Activated CD4-positive, alpha-beta T cell treated with anti-CD3 and anti-CD28 coated beads, Interleukin-2, amount 10 ng/mL, durations not matched to agents 24 days and 14 days (primary cell): ENCODE measurements at regions of chr13 and their contacts with region 1.

Region 1: DNA sequence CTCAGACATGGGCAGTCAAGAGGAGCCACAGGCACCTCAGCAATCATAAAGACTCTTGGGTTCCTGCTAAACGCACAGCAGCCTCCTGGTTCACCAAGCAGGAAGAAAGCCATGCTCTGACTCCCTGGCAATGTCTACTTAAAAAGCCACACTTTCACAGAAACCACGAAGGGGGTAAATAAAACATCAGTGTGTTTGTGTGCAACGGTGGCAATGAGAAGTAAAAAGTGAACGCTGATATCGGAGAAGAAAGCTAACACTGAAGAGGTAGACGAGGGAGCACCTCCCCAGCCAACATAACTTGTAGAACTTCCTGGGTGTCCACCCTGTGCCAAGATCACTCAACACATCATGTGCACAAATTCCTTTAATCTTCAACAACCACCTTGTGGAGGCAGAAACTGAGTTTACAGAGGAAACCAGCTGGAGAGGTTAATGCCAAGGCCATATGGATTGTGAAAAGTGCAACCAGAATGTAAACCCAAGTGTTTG is 30.2 kb downstream of the HSPH1 start:
- DNase-seq: peak; percentile 65
- H3K4me3 Mint-ChIP-seq: no peak overlapping the region
- H3K27ac Mint-ChIP-seq: peak overlapping the region; percentile 70
- H3K4me1 Mint-ChIP-seq: peaks cover 38% of the 10 kb centered on the region
- H3K27me3 Mint-ChIP-seq: peaks cover 15% of the 10 kb centered on the region

Region 2: DNA sequence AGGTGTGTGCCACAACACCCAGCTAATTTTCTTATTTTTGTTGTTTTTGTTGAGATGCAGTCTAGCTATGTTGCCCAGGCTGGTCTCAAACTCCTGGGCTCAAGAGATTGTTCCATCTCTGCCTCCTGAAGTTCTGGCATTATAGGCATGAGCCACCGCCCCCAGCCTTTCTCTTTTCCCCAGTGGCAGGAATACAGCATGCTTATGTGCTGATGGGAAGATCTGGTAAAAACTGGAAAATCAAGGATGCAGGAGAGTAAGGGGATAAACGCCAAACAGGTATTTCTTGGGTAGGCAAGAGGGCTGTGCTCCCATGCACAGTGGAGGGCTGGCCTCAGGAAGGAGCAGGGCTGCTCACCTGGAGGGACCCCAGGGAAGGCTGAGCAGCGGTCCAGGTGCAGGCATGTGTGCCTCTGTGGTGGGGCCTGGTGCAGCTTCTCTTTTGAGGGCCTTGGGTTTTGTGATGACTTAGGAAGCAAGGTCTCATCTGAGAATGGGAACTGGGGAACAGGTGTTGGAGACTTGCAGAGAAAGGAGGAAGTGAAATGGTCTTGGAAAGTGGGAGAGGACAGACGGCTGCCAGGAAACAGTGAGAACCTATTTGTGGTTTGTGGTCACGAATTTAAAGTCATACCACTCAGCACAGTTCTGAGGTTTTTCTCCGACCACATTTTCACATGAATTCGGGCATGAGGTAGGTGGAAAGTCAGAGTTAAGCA is 92.5 kb before region 1 on chr13:
- intact Hi-C with region 1: loop called (anchors 1 kb)
- DNase-seq: peak; percentile 81
- H3K4me3 Mint-ChIP-seq: peak overlapping the region; percentile 74
- H3K27ac Mint-ChIP-seq: peak overlapping the region; percentile 70
- H3K4me1 Mint-ChIP-seq: peaks cover 51% of the 10 kb centered on the region
- H3K27me3 Mint-ChIP-seq: peaks cover 29% of the 10 kb centered on the region

Region 3: GRCh38 chr13:31073859-31074718 is 57.4 kb before region 1 on chr13:
- intact Hi-C with region 1: loop called (anchors 5 kb)
- DNase-seq: peak; percentile 77
- H3K4me3 Mint-ChIP-seq: no peak overlapping the region
- H3K27ac Mint-ChIP-seq: no peak overlapping the region
- H3K4me1 Mint-ChIP-seq: peaks cover 3% of the 10 kb centered on the region
- H3K27me3 Mint-ChIP-seq: no peaks in the 10 kb centered on the region

Region 4: DNA sequence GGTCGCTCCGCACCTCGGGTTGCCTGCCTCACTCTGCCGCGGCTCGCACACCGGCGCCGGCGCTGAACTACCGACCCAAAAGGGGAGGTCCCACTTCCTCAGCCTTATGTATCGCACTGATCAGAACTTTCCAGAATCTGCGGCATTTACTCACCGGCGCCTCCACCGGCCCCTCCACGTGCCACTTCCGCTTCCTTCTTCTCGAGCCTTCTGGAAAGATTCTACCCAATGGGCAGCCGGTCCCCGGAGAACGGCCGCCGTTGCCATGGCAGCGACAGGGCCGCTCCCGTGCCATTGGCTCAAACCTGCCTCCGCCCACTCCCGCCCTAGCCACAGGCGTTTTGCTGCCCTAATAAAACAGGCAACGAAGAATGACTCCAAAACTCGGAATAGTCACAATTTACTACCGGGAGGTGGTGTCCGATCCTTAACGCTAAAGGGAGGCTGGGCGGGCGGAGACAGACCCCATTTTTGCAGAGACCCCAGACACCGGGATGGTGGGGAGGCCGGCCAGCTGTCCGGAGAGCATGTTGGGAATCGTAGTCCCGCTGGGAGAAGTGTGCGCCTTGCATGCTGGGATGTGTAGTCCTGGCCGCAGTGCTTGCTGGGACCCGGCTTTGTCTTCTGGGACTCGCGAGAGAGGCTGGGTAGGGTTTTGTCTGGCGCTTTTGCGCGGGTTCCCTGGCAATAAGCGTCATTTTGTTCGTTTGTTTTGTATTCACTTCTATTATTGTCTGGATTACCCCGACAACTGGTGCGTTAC is 30.5 kb after region 1 on chr13 and contains the start of gene HSPH1:
- intact Hi-C with region 1: loop called (anchors 2 kb)
- DNase-seq: peak; percentile 100
- H3K4me3 Mint-ChIP-seq: peak within 1 kb of the TSS; percentile 99
- H3K27ac Mint-ChIP-seq: peak within 1 kb of the TSS; percentile 99
- H3K4me1 Mint-ChIP-seq: peaks cover 45% of the 10 kb centered on the region
- H3K27me3 Mint-ChIP-seq: peaks cover 2% of the 10 kb centered on the region
- total RNA-seq, gene HSPH1: 381 and 385 TPM in 2 replicates

Region 5: DNA sequence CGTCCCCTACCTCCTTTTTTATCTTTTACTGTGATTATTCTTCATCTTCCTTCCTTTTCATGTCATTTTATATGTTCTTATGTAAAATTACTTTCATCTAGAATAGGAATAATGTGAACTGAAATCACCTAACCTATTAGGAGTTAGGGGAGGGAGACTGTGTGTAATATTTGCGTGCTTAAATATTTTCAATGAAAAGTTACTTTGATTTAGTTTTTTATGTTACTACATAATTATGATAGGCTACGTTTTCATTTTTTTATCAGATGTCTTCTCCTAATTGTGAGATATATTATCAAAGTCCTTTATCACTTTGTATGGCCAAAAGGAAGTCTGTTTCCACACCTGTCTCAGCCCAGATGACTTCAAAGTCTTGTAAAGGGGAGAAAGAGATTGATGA is 1266.4 kb after region 1 on chr13:
- intact Hi-C with region 1: no loop called
- DNase-seq: no peak
- H3K4me3 Mint-ChIP-seq: no peak overlapping the region
- H3K27ac Mint-ChIP-seq: no peak overlapping the region
- H3K4me1 Mint-ChIP-seq: peaks cover 1% of the 10 kb centered on the region
- H3K27me3 Mint-ChIP-seq: no peaks in the 10 kb centered on the region